ENCODE measurements at regions of chr16 and their contacts with region 1.

Region 1: DNA sequence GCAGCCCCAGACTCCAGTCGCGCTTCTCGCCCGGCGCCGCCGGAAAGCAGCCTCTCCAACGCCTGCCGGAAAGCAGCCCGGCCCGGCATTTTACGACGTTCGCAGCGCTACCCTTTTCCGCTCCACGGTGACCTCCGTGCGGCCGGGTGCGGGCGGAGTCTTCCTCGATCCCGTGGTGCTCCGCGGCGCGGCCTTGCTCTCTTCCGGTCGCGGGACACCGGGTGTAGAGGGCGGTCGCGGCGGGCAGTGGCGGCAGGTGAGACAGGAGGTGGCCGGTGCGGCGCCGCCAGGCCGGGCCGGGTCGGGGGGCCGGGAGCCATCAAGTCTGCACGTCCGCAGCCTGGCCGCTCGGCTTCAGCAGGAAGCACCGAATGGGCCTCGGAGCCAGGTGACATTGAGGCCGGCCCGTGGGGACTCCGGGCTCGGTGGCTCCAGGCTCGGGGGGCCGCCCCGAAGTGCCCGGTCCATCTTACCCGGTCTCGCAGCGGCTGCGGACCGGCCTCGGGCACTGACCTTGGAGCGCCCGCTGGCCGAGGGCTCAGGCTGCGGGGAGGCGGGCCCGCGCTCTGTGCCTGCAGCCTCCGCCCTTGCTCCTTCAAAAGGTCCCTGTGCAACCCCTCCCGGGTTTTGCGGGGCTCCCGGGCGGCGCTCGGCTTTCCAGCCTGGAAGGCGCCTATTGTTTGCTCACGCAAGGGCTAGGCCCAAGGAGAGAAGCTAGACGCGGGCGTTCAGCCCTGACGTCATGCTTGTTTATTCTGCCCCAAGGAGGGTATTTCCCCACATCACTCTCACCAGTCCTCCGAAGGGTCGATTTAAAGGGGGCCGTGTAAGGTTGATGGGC is at the starts of genes COX4I1 and EMC8:
- DNase-seq: peak; percentile 78 to 93
- H3K4me3 ChIP-seq: peak within 1 kb of the TSS; percentile 95
- H3K27ac ChIP-seq: peak within 1 kb of the TSS; percentile 59
- H3K4me1 ChIP-seq: peaks cover 16% of the 10 kb centered on the region
- H3K27me3 ChIP-seq: no peaks in the 10 kb centered on the region
- CTCF ChIP-seq: no peak
- total RNA-seq, gene COX4I1: 468 and 545 TPM in 2 replicates
- total RNA-seq, gene EMC8: 38.2 and 44.0 TPM in 2 replicates

Region 2: GRCh38 chr16:85072947-85073346 is 726.8 kb before region 1 on chr16:
- CTCF ChIA-PET with region 1: no interaction called
- POLR2A ChIA-PET with region 1: no interaction called
- intact Hi-C with region 1: no loop called
- DNase-seq: no peak
- H3K4me3 ChIP-seq: no peak overlapping the region
- H3K27ac ChIP-seq: no peak overlapping the region
- H3K4me1 ChIP-seq: no peaks in the 10 kb centered on the region
- H3K27me3 ChIP-seq: no peaks in the 10 kb centered on the region
- CTCF ChIP-seq: no peak

Region 3: DNA sequence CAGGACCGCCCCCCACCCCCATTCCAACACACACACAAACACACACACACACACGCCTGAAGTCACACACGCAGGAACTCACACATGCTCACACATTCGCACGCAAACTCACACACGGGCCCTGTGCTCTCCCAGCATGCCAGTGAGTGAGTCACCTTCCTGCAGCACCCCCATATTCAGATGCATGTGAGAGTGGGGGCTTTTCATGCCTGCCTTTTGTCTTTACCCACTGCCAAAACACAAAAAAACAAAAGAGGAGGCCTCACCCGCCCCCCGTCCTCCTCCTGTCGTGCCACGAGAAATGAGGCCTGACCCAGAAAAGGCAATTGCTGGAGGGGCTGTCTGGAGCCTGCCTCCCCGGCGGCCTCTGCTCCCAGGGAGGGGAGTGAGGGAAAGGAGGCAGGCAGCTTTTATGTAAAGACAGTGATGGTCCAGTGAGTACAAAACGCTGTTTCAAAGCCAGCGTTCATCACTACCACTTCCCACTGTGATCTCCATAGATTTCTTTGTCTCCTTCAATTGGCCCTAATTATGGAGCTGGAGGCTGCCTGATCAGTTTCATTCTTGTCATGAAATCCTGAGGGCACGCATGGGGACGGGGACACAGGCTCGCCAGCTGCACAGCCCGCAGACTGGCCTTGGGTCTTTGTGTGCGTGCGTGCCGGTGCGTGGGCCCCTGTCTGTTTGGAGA is 216.1 kb before region 1 on chr16:
- CTCF ChIA-PET with region 1: no interaction called
- POLR2A ChIA-PET with region 1: no interaction called
- intact Hi-C with region 1: no loop called
- DNase-seq: no peak
- H3K4me3 ChIP-seq: no peak overlapping the region
- H3K27ac ChIP-seq: no peak overlapping the region
- H3K4me1 ChIP-seq: no peaks in the 10 kb centered on the region
- H3K27me3 ChIP-seq: no peaks in the 10 kb centered on the region
- CTCF ChIP-seq: no peak

Region 4: GRCh38 chr16:85675251-85675927 is 124.3 kb before region 1 on chr16:
- CTCF ChIA-PET with region 1: no interaction called
- POLR2A ChIA-PET with region 1: no interaction called
- intact Hi-C with region 1: no loop called
- DNase-seq: no peak
- H3K4me3 ChIP-seq: no peak overlapping the region
- H3K27ac ChIP-seq: no peak overlapping the region
- H3K4me1 ChIP-seq: no peaks in the 10 kb centered on the region
- H3K27me3 ChIP-seq: no peaks in the 10 kb centered on the region
- CTCF ChIP-seq: peak; percentile 57

Region 5: DNA sequence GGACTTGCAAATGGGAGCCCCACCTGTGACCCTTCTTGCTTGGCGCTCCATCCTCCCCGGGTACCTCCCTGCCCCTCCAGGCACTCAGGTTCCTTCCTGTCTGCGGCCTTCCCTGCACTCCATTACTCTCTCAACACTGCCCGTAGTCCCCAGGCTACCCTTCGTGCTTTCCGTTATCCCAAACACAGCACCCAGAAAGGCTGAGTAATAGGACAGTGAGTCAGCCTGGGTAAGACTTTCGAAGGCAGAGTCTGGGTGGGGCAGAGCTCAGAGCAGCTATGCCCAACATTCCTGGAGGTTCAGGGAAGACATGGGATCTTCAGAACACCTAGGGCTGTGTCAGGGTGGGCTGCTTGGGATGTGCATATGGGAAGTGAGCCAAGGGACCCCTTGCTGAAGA is 32.1 kb before region 1 on chr16:
- CTCF ChIA-PET with region 1: interaction called, 18 read pairs
- POLR2A ChIA-PET with region 1: no interaction called
- intact Hi-C with region 1: no loop called
- DNase-seq: peak; percentile 68 to 87
- H3K4me3 ChIP-seq: no peak overlapping the region
- H3K27ac ChIP-seq: peak overlapping the region; percentile 45; the same call in 1 of the 2 replicates
- H3K4me1 ChIP-seq: peaks cover 15% of the 10 kb centered on the region
- H3K27me3 ChIP-seq: no peaks in the 10 kb centered on the region
- CTCF ChIP-seq: no peak

Region 6: GRCh38 chr16:85781695-85782370 is 17.9 kb before region 1 on chr16:
- CTCF ChIA-PET with region 1: no interaction called
- POLR2A ChIA-PET with region 1: no interaction called
- intact Hi-C with region 1: no loop called
- DNase-seq: no peak
- H3K4me3 ChIP-seq: no peak overlapping the region
- H3K27ac ChIP-seq: no peak overlapping the region
- H3K4me1 ChIP-seq: peaks cover 23% of the 10 kb centered on the region
- H3K27me3 ChIP-seq: no peaks in the 10 kb centered on the region
- CTCF ChIP-seq: no peak

Measured in PC-9 (cell line).